ENCODE measurements at regions of chr5 and their contacts with region 1.

Region 1: DNA sequence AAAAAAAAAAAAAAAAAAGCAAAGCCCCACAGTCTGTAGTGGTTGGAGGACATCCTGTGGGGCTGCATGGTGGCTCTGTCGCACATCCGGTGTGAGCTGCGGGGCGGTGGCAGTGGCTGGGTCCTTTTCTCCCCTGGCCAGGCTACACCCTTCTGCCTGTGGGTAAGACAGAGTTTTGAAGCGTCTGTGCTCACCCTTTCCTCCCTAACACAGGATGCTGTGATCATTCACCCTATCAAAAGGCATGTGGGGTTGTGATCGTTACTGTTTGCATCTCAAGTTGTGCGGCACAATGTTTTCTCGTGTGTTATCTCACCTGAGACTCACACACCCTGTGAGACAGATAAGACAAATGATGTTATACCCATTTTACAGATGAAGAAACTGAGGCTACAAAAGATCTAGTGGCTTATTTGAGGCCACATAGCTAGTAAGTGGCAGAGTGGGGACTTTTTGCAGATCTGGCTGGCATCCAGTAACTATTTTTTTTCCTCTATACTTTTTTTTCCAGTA is 17.5 kb downstream of the IRF1 start:
- DNase-seq: peak; percentile 55 to 94 (median 89)
- ATAC-seq: peak; percentile 68 to 91 (median 86)
- H3K4me3 ChIP-seq: no peak overlapping the region
- H3K4me3 Mint-ChIP-seq: peak overlapping the region; percentile 41 to 46 (median 43)
- H3K27ac ChIP-seq: peak overlapping the region; percentile 85
- H3K27ac Mint-ChIP-seq: peak overlapping the region; percentile 93 to 97
- H3K4me1 ChIP-seq: peaks cover 28 to 98% of the 10 kb centered on the region in 2 experiments
- H3K4me1 Mint-ChIP-seq: peaks cover 85 to 93% (median 90%) of the 10 kb centered on the region in 3 donors
- H3K27me3 ChIP-seq: no peaks in the 10 kb centered on the region
- H3K27me3 Mint-ChIP-seq: no peaks in the 10 kb centered on the region

Region 2: DNA sequence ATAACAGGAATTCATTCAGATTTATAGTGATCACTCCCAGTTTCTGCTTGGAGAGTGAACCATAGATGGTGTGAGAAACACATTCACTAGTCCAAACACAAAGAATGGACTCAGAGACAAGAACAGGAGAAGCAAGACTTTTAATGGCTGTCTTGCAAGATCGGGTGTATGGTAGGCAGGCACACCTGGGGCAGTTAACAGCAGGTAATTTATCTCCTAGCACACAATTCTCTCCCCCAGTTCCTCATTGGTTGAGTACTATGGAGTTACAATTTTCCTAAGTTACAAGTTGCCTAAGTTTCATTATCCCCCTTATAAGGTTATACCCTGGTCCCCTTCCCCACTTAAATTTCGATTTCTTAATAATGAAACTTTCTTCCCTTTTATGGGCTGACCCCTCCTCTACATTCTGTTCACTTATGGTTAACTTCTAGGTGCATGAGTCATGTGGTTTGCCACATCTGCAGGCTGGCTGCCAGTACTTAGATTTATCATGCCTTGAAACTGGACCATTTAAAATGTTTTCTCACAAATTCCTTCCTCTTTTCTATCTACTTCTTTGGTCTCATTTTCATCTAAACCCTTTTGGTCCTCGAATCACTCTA is 1931.4 kb before region 1 on chr5:
- CTCF ChIA-PET with region 1: no interaction called
- POLR2A ChIA-PET with region 1: no interaction called
- DNase-seq: no peak
- ATAC-seq: no peak
- H3K4me3 ChIP-seq: no peak overlapping the region
- H3K4me3 Mint-ChIP-seq: no peak overlapping the region
- H3K27ac ChIP-seq: no peak overlapping the region
- H3K27ac Mint-ChIP-seq: no peak overlapping the region
- H3K4me1 ChIP-seq: no peaks in the 10 kb centered on the region
- H3K4me1 Mint-ChIP-seq: no peaks in the 10 kb centered on the region
- H3K27me3 ChIP-seq: no peaks in the 10 kb centered on the region
- H3K27me3 Mint-ChIP-seq: peaks cover 0 to 4% of the 10 kb centered on the region in 2 donors

Region 3: GRCh38 chr5:132394667-132395259 is 78.3 kb before region 1 on chr5:
- CTCF ChIA-PET with region 1: no interaction called
- POLR2A ChIA-PET with region 1: interaction called, 4 to 14 read pairs
- DNase-seq: no peak
- ATAC-seq: no peak
- H3K4me3 ChIP-seq: no peak overlapping the region
- H3K4me3 Mint-ChIP-seq: peak overlapping the region in 1 of 3 donors; percentile 65
- H3K27ac ChIP-seq: no peak overlapping the region
- H3K27ac Mint-ChIP-seq: peak overlapping the region; percentile 81 to 93
- H3K4me1 ChIP-seq: peaks cover 32 to 42% of the 10 kb centered on the region in 2 experiments
- H3K4me1 Mint-ChIP-seq: peaks cover 70 to 94% (median 81%) of the 10 kb centered on the region in 3 donors
- H3K27me3 ChIP-seq: no peaks in the 10 kb centered on the region
- H3K27me3 Mint-ChIP-seq: no peaks in the 10 kb centered on the region

Region 4: GRCh38 chr5:132437604-132438266 is 35.3 kb before region 1 on chr5:
- CTCF ChIA-PET with region 1: interaction called in 1 of 2 experiments, 4 read pairs
- POLR2A ChIA-PET with region 1: interaction called, 6 to 19 read pairs
- DNase-seq: peak; percentile 40 to 76 (median 61)
- ATAC-seq: peak; percentile 93 to 98 (median 95)
- H3K4me3 ChIP-seq: no peak overlapping the region
- H3K4me3 Mint-ChIP-seq: peak overlapping the region; percentile 37 to 68 (median 47)
- H3K27ac ChIP-seq: peak overlapping the region; percentile 58
- H3K27ac Mint-ChIP-seq: peak overlapping the region; percentile 92 to 93
- H3K4me1 ChIP-seq: peaks cover 36 to 81% of the 10 kb centered on the region in 2 experiments
- H3K4me1 Mint-ChIP-seq: peaks cover 89 to 92% (median 91%) of the 10 kb centered on the region in 3 donors
- H3K27me3 ChIP-seq: no peaks in the 10 kb centered on the region
- H3K27me3 Mint-ChIP-seq: no peaks in the 10 kb centered on the region

Region 5: GRCh38 chr5:132495667-132496190 is 22.7 kb after region 1 on chr5:
- CTCF ChIA-PET with region 1: interaction called, 4 to 5 read pairs
- POLR2A ChIA-PET with region 1: interaction called, 60 to 133 read pairs
- DNase-seq: peak in 33 of 35 experiments; percentile 47 to 78 (median 61)
- ATAC-seq: peak; percentile 35 to 46 (median 38)
- H3K4me3 ChIP-seq: peak overlapping the region; percentile 61 to 93
- H3K4me3 Mint-ChIP-seq: peak overlapping the region; percentile 92 to 96 (median 93)
- H3K27ac ChIP-seq: peak overlapping the region; percentile 92
- H3K27ac Mint-ChIP-seq: peak overlapping the region; percentile 96 to 99
- H3K4me1 ChIP-seq: peaks cover 26 to 80% of the 10 kb centered on the region in 2 experiments
- H3K4me1 Mint-ChIP-seq: peaks cover 69 to 76% (median 74%) of the 10 kb centered on the region in 3 donors
- H3K27me3 ChIP-seq: no peaks in the 10 kb centered on the region
- H3K27me3 Mint-ChIP-seq: no peaks in the 10 kb centered on the region